ENCODE measurements at regions of chr10 and their contacts with region 1.

Region 1: DNA sequence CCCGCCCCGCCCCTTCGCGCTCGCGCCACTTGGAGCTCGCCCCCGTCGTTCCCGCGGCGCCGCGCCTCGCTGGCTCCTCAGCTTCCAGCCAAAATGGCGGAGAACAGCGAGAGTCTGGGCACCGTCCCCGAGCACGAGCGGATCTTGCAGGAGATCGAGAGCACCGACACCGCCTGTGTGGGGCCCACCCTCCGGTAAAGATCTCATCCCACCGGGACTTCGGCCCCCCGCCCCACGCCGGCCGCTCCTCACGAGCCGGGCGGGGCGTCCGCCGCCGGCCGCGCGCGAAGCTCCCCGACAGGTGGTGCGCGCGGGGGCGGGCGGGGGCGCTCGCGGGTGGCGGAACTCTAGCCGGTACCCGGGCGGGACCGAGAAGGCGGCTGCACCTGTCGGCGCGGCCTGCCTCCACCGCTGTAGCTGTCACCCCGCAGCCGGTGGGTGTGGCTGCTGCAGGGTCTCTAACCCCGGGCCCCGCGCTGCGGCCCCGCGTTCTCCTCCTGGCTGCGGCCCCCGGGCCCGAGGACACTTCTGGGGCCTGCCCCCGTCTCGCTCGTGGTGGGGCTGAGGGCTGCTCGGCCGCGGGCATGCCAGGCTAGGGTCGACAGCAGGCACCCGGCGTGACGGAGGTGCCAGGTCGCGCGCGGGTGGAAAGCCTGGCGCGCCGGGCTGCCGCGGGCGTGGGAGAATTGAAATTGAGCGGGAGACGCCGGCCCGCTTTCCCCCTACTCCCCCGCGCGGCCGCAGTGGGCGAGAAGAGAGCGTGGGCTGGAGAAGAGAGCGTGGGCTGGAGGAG is at the start of gene EXOC6:
- DNase-seq: peak; percentile 33
- ATAC-seq: peak; percentile 92
- H3K4me3 ChIP-seq: peak within 1 kb of the TSS; percentile 75 to 78
- H3K27ac ChIP-seq: peak within 1 kb of the TSS; percentile 60
- H3K4me1 ChIP-seq: peaks cover 16% of the 10 kb centered on the region
- H3K27me3 ChIP-seq: no peaks in the 10 kb centered on the region
- CTCF ChIP-seq: peak; percentile 71
- total RNA-seq, gene EXOC6: 17.0 TPM

Region 2: GRCh38 chr10:92822060-92822634 is 26.5 kb before region 1 on chr10:
- CTCF ChIA-PET with region 1: no interaction called
- POLR2A ChIA-PET with region 1: interaction called, 18 read pairs
- in situ Hi-C with region 1: no loop called
- intact Hi-C with region 1: no loop called
- DNase-seq: no peak
- ATAC-seq: peak; percentile 60
- H3K4me3 ChIP-seq: no peak overlapping the region
- H3K27ac ChIP-seq: peak overlapping the region; percentile 19; the same call in 1 of the 2 replicates
- H3K4me1 ChIP-seq: no peaks in the 10 kb centered on the region
- H3K27me3 ChIP-seq: peaks cover 3% of the 10 kb centered on the region; the same call in 1 of the 2 replicates
- CTCF ChIP-seq: no peak

Region 3: GRCh38 chr10:92880233-92880861 is 31.7 kb after region 1 on chr10:
- CTCF ChIA-PET with region 1: interaction called, 9 read pairs
- POLR2A ChIA-PET with region 1: no interaction called
- in situ Hi-C with region 1: no loop called
- intact Hi-C with region 1: loop called (anchors 2 kb)
- DNase-seq: no peak
- ATAC-seq: peak; percentile 76
- H3K4me3 ChIP-seq: no peak overlapping the region
- H3K27ac ChIP-seq: no peak overlapping the region
- H3K4me1 ChIP-seq: peaks cover 11% of the 10 kb centered on the region
- H3K27me3 ChIP-seq: no peaks in the 10 kb centered on the region
- CTCF ChIP-seq: peak; percentile 72; the same call in 1 of the 2 replicates

Region 4: GRCh38 chr10:93080350-93081046 is 231.9 kb after region 1 on chr10:
- CTCF ChIA-PET with region 1: no interaction called
- POLR2A ChIA-PET with region 1: no interaction called
- in situ Hi-C with region 1: no loop called
- intact Hi-C with region 1: no loop called
- DNase-seq: no peak
- ATAC-seq: peak; percentile 83
- H3K4me3 ChIP-seq: peak overlapping the region in 1 of 2 experiments; percentile 43; a peak in 3 of 4 replicates
- H3K27ac ChIP-seq: no peak overlapping the region
- H3K4me1 ChIP-seq: no peaks in the 10 kb centered on the region
- H3K27me3 ChIP-seq: peaks cover 15% of the 10 kb centered on the region
- CTCF ChIP-seq: peak; percentile 95

Region 5: DNA sequence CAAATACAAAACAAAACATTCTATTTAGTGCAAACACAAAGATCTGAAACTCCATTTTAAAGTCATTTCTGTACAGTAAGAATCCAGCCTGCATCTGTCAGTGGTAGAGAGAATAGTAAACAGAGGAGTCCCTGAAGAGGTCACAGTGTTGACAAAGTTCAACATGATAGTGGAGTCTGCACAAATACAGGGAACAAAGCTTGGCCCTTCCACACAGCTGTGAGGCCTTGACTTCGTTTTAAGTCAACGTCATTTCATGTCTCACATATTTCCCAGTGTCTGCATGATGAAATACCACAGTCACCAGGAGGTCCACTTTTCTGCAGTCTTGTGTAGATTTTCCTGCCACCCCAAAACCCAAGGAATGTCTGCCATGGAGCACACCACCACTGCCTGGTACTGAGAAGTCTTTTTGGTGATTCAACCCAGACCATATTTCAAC is 258.0 kb after region 1 on chr10:
- CTCF ChIA-PET with region 1: interaction called, 12 read pairs
- POLR2A ChIA-PET with region 1: no interaction called
- in situ Hi-C with region 1: no loop called
- intact Hi-C with region 1: no loop called
- DNase-seq: no peak
- ATAC-seq: no peak
- H3K4me3 ChIP-seq: no peak overlapping the region
- H3K27ac ChIP-seq: no peak overlapping the region
- H3K4me1 ChIP-seq: no peaks in the 10 kb centered on the region
- H3K27me3 ChIP-seq: no peaks in the 10 kb centered on the region
- CTCF ChIP-seq: no peak